ENCODE measurements at regions of chr1 and their contacts with region 1.

Region 1: DNA sequence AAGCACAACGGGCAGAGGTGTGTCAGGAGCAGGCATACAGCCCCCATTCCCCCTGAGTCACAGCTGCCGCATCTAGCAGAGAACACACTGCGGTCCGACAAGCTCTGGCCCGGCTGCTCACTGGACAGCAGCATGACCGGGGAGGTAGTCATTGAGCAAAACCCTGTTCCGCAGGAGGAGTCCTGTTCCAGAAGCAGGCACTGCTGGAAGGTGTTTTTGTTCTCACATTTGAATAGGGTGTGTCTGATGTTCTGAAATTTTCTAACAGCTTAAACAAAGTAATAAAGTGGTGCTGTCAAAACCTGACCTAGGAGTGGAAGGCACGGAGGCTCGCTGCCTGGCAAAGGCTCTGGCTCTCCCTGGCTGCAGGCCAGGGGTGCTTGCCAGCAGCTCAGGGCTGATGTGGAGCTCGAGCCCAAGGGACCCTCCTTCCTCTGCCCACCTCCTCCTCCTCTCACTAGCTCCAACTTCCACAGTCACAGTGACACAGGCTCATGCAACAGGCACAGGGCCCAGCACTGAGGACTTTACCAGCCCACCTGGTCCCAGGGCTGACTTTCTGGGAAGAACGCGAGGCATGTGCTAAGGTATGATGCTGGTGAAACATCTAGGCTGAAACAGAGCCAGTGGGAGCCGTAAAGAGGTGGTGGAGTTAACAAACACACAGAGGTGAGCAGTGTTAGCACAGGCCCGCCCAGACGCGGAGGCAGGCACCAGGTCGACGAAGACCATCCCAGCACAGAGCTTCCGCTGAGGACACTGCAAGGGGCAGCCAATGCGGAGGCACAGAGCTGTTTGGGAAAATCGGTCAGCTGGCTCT is 118.6 kb upstream of the IFFO2 start:
- DNase-seq: no peak
- H3K4me3 Mint-ChIP-seq: no peak overlapping the region
- H3K27ac Mint-ChIP-seq: peak overlapping the region; percentile 71
- H3K4me1 Mint-ChIP-seq: peaks cover 34% of the 10 kb centered on the region
- H3K27me3 Mint-ChIP-seq: no peaks in the 10 kb centered on the region

Region 2: GRCh38 chr1:18913065-18913835 is 161.9 kb before region 1 on chr1:
- CTCF ChIA-PET with region 1: interaction called, 36 read pairs
- POLR2A ChIA-PET with region 1: interaction called, 5 read pairs
- DNase-seq: peak; percentile 74
- H3K4me3 Mint-ChIP-seq: no peak overlapping the region
- H3K27ac Mint-ChIP-seq: peak overlapping the region; percentile 44
- H3K4me1 Mint-ChIP-seq: peaks cover 5% of the 10 kb centered on the region
- H3K27me3 Mint-ChIP-seq: no peaks in the 10 kb centered on the region

Region 3: GRCh38 chr1:18956369-18957135 is 118.6 kb before region 1 on chr1 and contains the start of gene IFFO2:
- CTCF ChIA-PET with region 1: interaction called, 3 read pairs
- POLR2A ChIA-PET with region 1: interaction called, 48 read pairs
- DNase-seq: peak; percentile 97
- H3K4me3 Mint-ChIP-seq: peak within 1 kb of the TSS; percentile 83
- H3K27ac Mint-ChIP-seq: peak within 1 kb of the TSS; percentile 23
- H3K4me1 Mint-ChIP-seq: peaks cover 57% of the 10 kb centered on the region
- H3K27me3 Mint-ChIP-seq: peaks cover 24% of the 10 kb centered on the region
- total RNA-seq, gene IFFO2: 19.9 to 22.7 TPM

Region 4: DNA sequence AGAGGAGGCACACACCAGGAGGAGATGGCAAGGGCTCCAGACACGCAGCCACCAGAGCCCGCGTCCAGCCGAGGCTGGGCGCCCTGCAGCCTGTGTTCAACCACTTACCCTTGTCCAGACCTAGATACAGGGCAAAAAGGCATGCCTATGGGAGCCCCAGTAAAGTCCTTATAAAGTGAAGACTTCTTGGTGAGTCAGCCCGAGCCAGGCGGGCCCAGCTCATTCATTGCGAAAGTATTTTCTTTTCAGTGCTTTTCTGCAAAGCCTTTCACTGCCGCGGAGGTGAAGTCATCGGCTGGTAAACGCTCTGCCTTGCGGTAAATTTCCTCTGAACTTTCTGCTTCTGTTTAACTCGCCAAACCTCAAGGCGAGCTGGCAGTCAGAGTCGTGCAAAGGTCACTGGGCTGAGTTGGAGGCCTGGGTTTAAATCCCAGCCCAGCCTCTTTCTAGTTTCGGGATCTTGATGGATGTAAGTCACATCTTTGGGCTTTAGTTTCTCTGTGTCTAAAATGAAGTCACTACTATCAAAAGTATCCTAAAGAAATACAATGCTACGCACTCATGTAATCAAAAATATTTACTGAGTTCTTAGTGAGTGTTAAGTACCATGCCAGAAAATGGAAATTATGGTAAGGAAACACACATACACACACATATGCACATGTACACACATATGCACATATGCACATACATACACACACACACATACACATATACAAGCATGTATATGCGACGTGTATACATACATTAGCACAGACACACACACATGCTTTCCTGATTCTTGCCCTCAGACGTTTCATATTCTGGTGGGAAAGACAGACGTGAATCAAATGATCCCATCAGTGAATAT is 63.9 kb before region 1 on chr1:
- CTCF ChIA-PET with region 1: interaction called, 7 read pairs
- POLR2A ChIA-PET with region 1: interaction called, 13 read pairs
- DNase-seq: peak; percentile 85
- H3K4me3 Mint-ChIP-seq: no peak overlapping the region
- H3K27ac Mint-ChIP-seq: peak overlapping the region; percentile 1
- H3K4me1 Mint-ChIP-seq: peaks cover 28% of the 10 kb centered on the region
- H3K27me3 Mint-ChIP-seq: peaks cover 13% of the 10 kb centered on the region

Region 5: DNA sequence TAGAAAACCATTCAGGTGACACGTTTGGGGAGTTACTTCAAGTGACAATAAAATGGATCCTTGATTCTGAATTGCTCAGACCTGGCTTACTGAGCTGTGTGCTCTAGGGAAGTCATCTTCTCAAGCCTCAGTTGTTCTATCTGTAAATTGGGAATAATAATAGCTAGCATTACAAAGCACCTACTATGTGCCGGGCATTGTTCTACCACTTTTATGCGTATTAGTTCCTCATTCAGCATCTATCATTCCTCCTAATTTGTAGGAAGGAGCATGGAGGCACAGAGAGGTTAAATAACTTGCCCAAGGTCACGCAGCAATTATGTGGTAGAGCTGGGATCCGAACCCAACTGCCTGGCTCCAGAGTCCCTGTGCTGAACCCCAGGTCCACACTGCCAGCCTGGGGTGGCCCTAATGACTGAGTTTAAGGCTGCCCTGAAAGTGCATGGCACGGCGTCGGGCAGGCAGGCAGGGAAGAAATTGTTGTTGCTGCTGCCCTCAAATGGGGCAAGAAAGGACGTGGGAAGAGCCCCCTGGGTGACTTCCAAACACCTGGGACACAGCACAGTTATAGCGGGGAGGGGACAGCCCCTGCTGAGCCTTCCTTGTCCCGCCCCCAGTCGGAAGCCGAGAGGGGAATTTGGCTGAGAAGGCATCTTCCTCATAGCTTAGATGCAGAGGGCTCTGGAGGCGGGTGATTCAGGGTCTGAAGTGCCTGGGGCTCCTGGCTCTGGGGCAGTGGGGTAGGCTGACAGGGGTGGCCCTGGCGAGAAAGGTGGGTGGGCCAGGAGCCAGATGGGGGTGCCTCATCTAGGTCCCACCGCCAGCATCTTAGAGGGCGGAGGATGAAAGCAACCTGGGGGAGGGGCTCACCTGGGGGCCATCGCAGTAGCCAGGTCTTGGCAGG is 32.2 kb before region 1 on chr1:
- CTCF ChIA-PET with region 1: no interaction called
- POLR2A ChIA-PET with region 1: no interaction called
- DNase-seq: no peak
- H3K4me3 Mint-ChIP-seq: no peak overlapping the region
- H3K27ac Mint-ChIP-seq: no peak overlapping the region
- H3K4me1 Mint-ChIP-seq: no peaks in the 10 kb centered on the region
- H3K27me3 Mint-ChIP-seq: peaks cover 30% of the 10 kb centered on the region

Region 6: GRCh38 chr1:19087737-19088594 is 12.9 kb after region 1 on chr1:
- CTCF ChIA-PET with region 1: interaction called, 4 read pairs
- POLR2A ChIA-PET with region 1: interaction called, 13 read pairs
- DNase-seq: no peak
- H3K4me3 Mint-ChIP-seq: no peak overlapping the region
- H3K27ac Mint-ChIP-seq: peak overlapping the region; percentile 10
- H3K4me1 Mint-ChIP-seq: peaks cover 24% of the 10 kb centered on the region
- H3K27me3 Mint-ChIP-seq: no peaks in the 10 kb centered on the region